ENCODE measurements at regions of chrX and their contacts with region 1.

Region 1: GRCh38 chrX:133590703-133591505 is 175.6 kb upstream of the GPC4 start:
- DNase-seq: no peak
- H3K4me3 ChIP-seq: no peak overlapping the region
- H3K27ac ChIP-seq: no peak overlapping the region
- H3K4me1 ChIP-seq: no peaks in the 10 kb centered on the region
- H3K27me3 ChIP-seq: peaks cover 0 to 25% of the 10 kb centered on the region in 2 donors
- CTCF ChIP-seq: no peak
- POLR2A ChIP-seq: no peak

Region 2: GRCh38 chrX:132631579-132632232 is 959.2 kb before region 1 on chrX:
- intact Hi-C with region 1: loop called (anchors 5 kb)
- DNase-seq: no peak
- H3K4me3 ChIP-seq: no peak overlapping the region
- H3K27ac ChIP-seq: no peak overlapping the region
- H3K4me1 ChIP-seq: no peaks in the 10 kb centered on the region
- H3K27me3 ChIP-seq: peaks cover 0 to 55% of the 10 kb centered on the region in 2 donors
- CTCF ChIP-seq: peak in 2 of 3 donors; percentile 29 to 43
- POLR2A ChIP-seq: no peak

Region 3: DNA sequence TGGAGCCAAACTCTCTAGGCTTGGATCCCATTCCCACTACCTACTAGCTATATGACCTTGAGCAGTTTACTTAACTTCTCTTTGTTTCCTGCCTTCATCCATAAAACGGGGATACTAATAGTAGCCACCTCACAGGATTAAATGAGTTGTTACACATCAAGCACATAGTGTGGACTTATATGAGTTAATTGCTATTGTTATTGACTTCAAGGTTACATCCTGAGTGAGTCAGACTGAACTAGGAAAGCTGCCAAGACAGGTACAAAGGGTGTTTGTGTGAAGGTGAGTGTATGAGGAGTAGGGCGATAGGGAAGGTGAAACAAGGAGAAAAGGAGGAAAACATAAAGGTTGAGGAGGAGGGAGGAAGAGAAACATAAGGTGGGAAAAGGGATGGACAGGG is 405.0 kb before region 1 on chrX:
- intact Hi-C with region 1: no loop called
- DNase-seq: peak in 1 of 2 donors; percentile 22
- H3K4me3 ChIP-seq: no peak overlapping the region
- H3K27ac ChIP-seq: peak overlapping the region; percentile 23 to 45
- H3K4me1 ChIP-seq: no peaks in the 10 kb centered on the region
- H3K27me3 ChIP-seq: peaks cover 0 to 7% of the 10 kb centered on the region in 2 donors
- CTCF ChIP-seq: no peak
- POLR2A ChIP-seq: no peak

Region 4: GRCh38 chrX:133609151-133609550 is 18.2 kb after region 1 on chrX:
- intact Hi-C with region 1: loop called (anchors 1 kb)
- DNase-seq: no peak
- H3K4me3 ChIP-seq: no peak overlapping the region
- H3K27ac ChIP-seq: no peak overlapping the region
- H3K4me1 ChIP-seq: no peaks in the 10 kb centered on the region
- H3K27me3 ChIP-seq: peaks cover 0 to 25% of the 10 kb centered on the region in 2 donors
- CTCF ChIP-seq: no peak
- POLR2A ChIP-seq: no peak